ENCODE measurements at regions of chr6 and their contacts with region 1.

Region 1: GRCh38 chr6:159981403-159982245 is 12.7 kb downstream of the IGF2R start:
- DNase-seq: no peak
- H3K4me3 Mint-ChIP-seq: peak overlapping the region; percentile 5
- H3K27ac Mint-ChIP-seq: peak overlapping the region; percentile 3
- H3K4me1 Mint-ChIP-seq: peaks cover 71% of the 10 kb centered on the region
- H3K27me3 Mint-ChIP-seq: no peaks in the 10 kb centered on the region
- CTCF ChIP-seq: no peak

Region 2: GRCh38 chr6:160041608-160042007 is 60.0 kb after region 1 on chr6:
- CTCF ChIA-PET with region 1: interaction called, 3 read pairs
- intact Hi-C with region 1: loop called (anchors 5 kb)
- DNase-seq: peak; percentile 41
- H3K4me3 Mint-ChIP-seq: no peak overlapping the region
- H3K27ac Mint-ChIP-seq: no peak overlapping the region
- H3K4me1 Mint-ChIP-seq: peaks cover 20% of the 10 kb centered on the region
- H3K27me3 Mint-ChIP-seq: no peaks in the 10 kb centered on the region
- CTCF ChIP-seq: no peak